Activated B cell treated with CpG ODN at 0.5 μM for 24 hours (primary cell): ENCODE measurements at regions of chr11 and their contacts with region 1.

Region 1: DNA sequence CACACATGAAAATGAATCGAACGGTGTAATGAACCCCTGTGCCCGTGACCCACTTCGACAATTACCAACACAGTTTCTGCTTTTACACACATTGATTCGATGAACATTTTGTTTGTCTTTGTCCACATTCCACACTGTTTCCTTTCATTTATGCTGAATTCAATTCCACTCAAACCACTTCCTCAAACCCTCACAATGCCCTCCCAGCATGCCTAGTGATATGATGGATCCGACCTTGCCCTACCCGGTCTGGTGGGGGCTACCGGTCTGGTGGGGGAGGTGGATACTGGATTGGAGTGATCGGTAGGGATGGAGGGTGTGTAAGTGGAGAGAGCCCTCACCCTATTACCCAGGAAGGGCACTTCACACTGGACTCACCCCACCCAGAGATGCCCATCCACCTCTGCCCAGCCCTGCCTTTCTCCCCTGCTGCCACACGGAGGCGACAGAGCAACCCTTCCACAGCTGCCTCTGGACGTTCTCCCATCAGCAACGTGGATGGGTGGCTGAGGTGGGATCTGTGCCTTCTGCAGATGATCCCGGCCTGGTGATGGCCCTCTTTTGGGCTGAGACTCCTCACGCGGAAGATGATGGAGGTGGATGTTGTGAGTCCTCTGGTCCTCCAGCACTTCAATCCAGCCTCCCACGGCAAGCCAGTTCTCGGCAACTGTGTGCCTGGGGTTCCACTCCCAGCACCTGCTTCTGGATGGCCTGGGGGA is 33.0 kb upstream of the P2RY2 start:
- DNase-seq: peak; percentile 65
- ATAC-seq: peak; percentile 41
- H3K4me3 Mint-ChIP-seq: peak overlapping the region; percentile 53
- H3K27ac Mint-ChIP-seq: no peak overlapping the region
- H3K4me1 Mint-ChIP-seq: peaks cover 33% of the 10 kb centered on the region
- H3K27me3 Mint-ChIP-seq: no peaks in the 10 kb centered on the region
- CTCF ChIP-seq: peak; percentile 60

Region 2: DNA sequence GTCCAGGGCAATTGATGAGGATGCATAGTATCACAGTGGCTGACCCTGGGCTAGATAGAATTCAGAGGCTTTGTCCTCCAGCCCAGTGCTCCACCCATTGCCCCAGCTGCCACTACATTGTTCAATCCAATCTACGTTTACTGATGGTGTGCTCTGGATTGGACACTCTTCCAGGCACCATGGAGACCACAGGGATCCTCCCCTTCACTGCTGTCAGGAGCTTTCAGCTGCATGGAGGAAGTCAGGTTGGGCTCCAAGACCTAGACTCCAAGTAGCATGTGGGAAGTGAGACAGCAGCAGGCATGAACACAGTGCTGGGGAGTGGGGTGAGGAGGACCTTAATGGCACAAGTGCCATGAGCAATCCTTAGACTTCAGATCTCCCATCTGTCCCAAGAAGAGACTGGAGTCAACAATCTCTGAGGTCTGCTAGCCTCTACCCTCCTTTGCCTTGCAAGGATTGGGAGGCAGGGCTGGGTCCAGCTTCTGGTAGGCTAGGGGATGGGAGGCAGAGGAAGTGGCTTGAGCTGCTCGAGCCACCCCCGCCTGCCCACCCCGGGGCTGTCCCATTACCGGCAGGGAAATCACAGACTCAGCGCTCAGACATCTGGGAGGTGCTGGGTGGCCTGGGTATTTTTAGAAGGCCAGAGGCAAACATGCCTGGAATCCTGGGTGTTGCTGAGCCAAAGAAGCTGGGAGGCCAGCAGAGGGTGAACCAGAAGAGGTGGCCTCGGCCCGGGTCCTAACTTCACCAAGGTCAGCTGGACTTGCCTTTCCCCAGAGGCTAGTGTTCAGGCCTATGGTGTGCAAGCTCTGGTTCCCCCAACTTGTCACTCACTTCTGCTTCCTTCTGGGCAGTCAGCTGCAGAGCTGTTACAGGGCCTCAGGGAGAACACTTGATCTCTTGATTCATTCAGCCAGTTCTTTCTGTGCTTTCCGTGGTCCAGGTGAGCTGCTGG is 27.8 kb before region 1 on chr11:
- CTCF ChIA-PET with region 1: no interaction called
- POLR2A ChIA-PET with region 1: interaction called, 8 read pairs
- intact Hi-C with region 1: loop called (anchors 1 kb)
- DNase-seq: peak; percentile 51
- ATAC-seq: peak; percentile 51
- H3K4me3 Mint-ChIP-seq: peak overlapping the region; percentile 78
- H3K27ac Mint-ChIP-seq: peak overlapping the region; percentile 97
- H3K4me1 Mint-ChIP-seq: peaks cover 95% of the 10 kb centered on the region
- H3K27me3 Mint-ChIP-seq: no peaks in the 10 kb centered on the region
- CTCF ChIP-seq: no peak

Region 3: DNA sequence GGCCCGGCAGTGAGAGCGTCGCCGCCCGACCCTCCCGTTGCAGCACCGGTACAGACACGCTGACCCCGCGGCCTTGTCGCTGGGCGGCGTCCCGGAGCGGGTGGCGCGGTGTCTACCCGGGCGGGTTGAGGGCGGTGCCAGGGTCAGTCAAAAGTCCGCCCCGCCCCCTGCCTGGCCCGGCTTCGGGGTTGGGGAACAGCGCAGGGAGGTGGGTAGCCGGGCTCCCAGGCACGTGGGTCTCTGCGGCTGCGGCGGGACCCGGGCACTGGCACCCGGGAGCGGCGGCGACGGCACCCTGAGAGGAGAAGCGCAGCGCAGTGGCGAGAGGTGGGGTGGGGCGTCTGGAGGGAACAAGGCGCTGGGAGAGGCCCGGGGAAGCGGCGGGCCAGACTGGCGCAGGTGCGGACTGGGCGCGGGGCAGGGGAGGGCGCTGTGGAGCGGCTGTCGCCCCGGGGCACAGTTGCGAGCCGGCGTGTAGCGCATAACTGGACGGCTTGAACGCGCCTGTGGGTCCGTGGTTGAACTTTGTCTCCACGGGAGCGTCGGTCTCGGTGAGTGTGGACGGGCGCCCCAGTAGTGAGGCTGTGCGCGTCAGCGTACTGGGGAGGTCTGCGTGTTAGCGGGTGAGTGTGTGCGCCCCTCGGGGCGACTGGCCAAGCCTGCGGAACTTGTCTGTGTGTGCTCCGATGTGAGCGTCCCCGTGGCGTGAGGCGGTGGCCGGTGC is 33.2 kb after region 1 on chr11 and contains the start of gene P2RY2:
- CTCF ChIA-PET with region 1: no interaction called
- POLR2A ChIA-PET with region 1: interaction called, 7 read pairs
- intact Hi-C with region 1: loop called (anchors 2 kb)
- DNase-seq: peak; percentile 58
- ATAC-seq: peak; percentile 83
- H3K4me3 Mint-ChIP-seq: peak within 1 kb of the TSS; percentile 74
- H3K27ac Mint-ChIP-seq: no peak within 1 kb of the TSS
- H3K4me1 Mint-ChIP-seq: peaks cover 24% of the 10 kb centered on the region
- H3K27me3 Mint-ChIP-seq: peaks cover 23% of the 10 kb centered on the region
- CTCF ChIP-seq: no peak
- total RNA-seq, gene P2RY2: 0.22 and 0.42 TPM in 2 replicates

Region 4: GRCh38 chr11:73236854-73237253 is 51.7 kb after region 1 on chr11:
- CTCF ChIA-PET with region 1: interaction called, 87 read pairs
- POLR2A ChIA-PET with region 1: interaction called, 5 read pairs
- intact Hi-C with region 1: loop called (anchors 1 kb)
- DNase-seq: no peak
- ATAC-seq: peak; percentile 77
- H3K4me3 Mint-ChIP-seq: no peak overlapping the region
- H3K27ac Mint-ChIP-seq: no peak overlapping the region
- H3K4me1 Mint-ChIP-seq: no peaks in the 10 kb centered on the region
- H3K27me3 Mint-ChIP-seq: peaks cover 5% of the 10 kb centered on the region
- CTCF ChIP-seq: no peak

Region 5: GRCh38 chr11:73242251-73243079 is 57.4 kb after region 1 on chr11:
- CTCF ChIA-PET with region 1: interaction called, 87 read pairs
- POLR2A ChIA-PET with region 1: interaction called, 5 read pairs
- intact Hi-C with region 1: loop called (anchors 1 kb)
- DNase-seq: peak; percentile 65
- ATAC-seq: peak; percentile 95
- H3K4me3 Mint-ChIP-seq: no peak overlapping the region
- H3K27ac Mint-ChIP-seq: no peak overlapping the region
- H3K4me1 Mint-ChIP-seq: peaks cover 4% of the 10 kb centered on the region
- H3K27me3 Mint-ChIP-seq: peaks cover 5% of the 10 kb centered on the region
- CTCF ChIP-seq: peak; percentile 47

Region 6: DNA sequence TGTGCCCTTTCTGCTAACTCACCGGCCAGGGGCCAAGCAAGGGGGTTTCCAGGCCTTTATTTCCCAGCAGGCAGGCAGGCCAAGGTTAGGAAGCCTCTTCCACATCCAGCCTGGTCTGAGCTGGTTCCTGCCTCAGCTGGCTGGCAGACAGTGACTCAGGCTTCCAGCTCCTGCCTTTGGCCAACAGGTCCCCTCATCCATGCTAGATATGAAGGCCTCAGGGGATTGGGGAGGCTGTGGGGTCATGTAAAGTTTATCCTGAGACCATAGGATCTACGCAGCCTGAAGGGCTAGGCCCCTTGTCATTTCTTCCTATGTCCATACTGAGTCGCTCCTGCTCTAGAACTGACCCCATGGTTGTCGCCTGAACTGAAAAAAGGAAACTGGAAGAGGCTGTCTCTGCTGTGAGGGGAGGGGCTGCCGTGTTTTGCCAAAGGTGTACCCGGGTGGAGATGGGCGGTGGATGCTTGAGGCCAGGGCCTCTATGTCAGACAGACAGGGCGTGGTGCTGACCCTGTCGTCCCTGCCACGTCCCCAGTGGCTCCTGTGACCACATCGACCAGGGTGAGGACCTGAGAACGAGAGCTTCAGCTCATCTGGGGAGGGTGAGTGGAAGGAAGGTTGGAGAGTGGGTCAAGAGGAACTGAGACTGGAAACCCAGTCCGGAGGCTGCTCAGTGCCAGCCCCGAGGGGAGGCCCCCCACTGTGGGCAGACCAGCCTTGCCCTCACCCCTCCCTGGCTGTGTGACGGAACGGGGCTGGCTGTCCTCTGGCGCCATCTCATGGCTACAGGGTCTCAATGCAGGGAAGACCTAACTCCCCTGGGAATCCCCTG is 104.0 kb after region 1 on chr11:
- CTCF ChIA-PET with region 1: interaction called, 38 read pairs
- POLR2A ChIA-PET with region 1: interaction called, 17 read pairs
- intact Hi-C with region 1: loop called (anchors 1 kb)
- DNase-seq: peak; percentile 66
- ATAC-seq: peak; percentile 90
- H3K4me3 Mint-ChIP-seq: peak overlapping the region; percentile 68
- H3K27ac Mint-ChIP-seq: peak overlapping the region; percentile 88
- H3K4me1 Mint-ChIP-seq: peaks cover 33% of the 10 kb centered on the region
- H3K27me3 Mint-ChIP-seq: no peaks in the 10 kb centered on the region
- CTCF ChIP-seq: peak; percentile 59

Region 7: DNA sequence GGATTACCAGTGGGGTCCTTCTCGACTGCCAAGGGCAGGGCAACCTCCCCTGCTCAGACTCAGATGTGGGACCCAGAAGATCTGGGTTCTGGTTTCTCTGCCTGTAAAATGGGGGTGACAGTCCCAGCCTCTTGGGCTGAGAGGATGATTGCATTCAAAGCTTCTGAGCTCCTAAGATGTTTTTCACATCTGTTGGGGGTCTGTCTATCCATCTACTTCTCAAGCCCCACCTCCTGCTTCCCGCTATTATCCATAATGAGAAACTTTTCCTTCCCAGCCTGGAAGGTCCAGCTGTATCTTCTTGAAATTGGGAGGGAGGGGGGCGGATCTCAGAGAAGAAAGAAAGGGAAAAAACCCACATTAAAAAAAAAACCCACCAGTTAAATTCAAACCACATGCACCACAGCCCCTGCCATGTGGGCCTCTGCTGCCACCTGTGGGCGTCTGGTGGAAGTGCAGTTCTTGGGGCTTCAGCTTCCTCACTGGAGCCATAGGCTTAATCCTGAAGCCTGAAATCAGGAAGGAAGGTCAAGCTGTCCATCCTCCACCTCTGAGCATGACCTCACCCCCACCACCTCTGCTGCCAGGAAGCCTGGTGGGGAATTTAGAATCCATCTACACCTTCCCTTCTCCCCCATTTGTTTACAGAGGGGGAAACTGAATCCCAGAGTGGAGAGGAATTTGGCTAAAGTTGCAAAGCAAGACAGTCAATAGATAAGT is 150.3 kb after region 1 on chr11:
- CTCF ChIA-PET with region 1: interaction called, 4 read pairs
- POLR2A ChIA-PET with region 1: no interaction called
- intact Hi-C with region 1: loop called (anchors 5 kb)
- DNase-seq: peak; percentile 78
- ATAC-seq: peak; percentile 89
- H3K4me3 Mint-ChIP-seq: no peak overlapping the region
- H3K27ac Mint-ChIP-seq: no peak overlapping the region
- H3K4me1 Mint-ChIP-seq: no peaks in the 10 kb centered on the region
- H3K27me3 Mint-ChIP-seq: no peaks in the 10 kb centered on the region
- CTCF ChIP-seq: peak; percentile 85

Region 8: DNA sequence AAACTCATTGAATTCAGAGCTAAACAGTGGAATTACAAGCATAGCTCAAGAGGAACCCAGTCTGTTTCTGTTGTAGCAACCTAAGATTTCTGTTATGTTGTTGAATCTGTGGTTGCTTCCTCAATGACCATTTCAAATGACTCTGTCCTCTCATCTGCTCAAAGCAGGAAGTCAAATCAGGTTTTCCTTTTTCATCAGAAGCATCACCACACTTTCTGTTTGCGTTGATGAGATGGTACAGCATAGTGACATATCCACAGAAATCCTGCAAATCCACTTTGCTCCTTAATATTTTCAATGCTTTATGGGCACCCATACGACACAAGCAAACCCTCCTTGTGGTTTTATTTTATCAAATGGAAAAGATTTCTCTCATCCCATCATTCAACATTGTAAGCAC is 810.1 kb after region 1 on chr11:
- CTCF ChIA-PET with region 1: no interaction called
- POLR2A ChIA-PET with region 1: no interaction called
- intact Hi-C with region 1: no loop called
- DNase-seq: no peak
- ATAC-seq: peak; percentile 45
- H3K4me3 Mint-ChIP-seq: peak overlapping the region; percentile 36
- H3K27ac Mint-ChIP-seq: peak overlapping the region; percentile 92
- H3K4me1 Mint-ChIP-seq: peaks cover 96% of the 10 kb centered on the region
- H3K27me3 Mint-ChIP-seq: no peaks in the 10 kb centered on the region
- CTCF ChIP-seq: no peak